ENCODE measurements at regions of chr2 and their contacts with region 1.

Region 1: GRCh38 chr2:202161151-202161835 is 77.1 kb downstream of the SUMO1 start:
- DNase-seq: no peak
- H3K4me3 ChIP-seq: no peak overlapping the region
- H3K27ac ChIP-seq: peak overlapping the region in 1 of 2 donors; percentile 43
- H3K4me1 ChIP-seq: peaks cover 0 to 4% of the 10 kb centered on the region in 2 donors
- H3K27me3 ChIP-seq: no peaks in the 10 kb centered on the region
- CTCF ChIP-seq: no peak
- POLR2A ChIP-seq: no peak

Region 2: GRCh38 chr2:201807452-201807999 is 353.8 kb before region 1 on chr2:
- intact Hi-C with region 1: loop called (anchors 10 kb)
- DNase-seq: peak in 1 of 2 donors; percentile 23
- H3K4me3 ChIP-seq: peak overlapping the region in 1 of 3 donors; percentile 27
- H3K27ac ChIP-seq: peak overlapping the region; percentile 23 to 67
- H3K4me1 ChIP-seq: no peaks in the 10 kb centered on the region
- H3K27me3 ChIP-seq: no peaks in the 10 kb centered on the region
- CTCF ChIP-seq: no peak
- POLR2A ChIP-seq: no peak

Region 3: DNA sequence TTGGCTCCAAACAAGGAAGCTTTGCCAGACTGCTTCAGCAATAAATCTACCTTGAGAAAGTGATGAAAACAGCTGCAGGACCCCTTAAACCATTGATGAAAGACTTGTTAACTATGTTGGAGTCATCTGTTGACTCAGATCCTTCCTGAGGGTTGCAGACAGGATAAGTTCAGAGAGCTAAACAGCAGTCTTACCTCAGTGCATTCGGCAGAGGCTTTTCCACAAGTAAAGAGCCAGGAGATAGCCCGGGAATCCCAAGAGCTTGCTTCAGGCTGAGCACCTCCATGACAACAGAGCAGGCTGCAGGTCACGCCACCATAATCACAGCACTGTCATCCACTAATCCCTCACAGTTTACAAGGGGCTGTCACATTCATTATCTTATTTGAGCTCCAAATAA is 64.6 kb before region 1 on chr2:
- intact Hi-C with region 1: no loop called
- DNase-seq: no peak
- H3K4me3 ChIP-seq: no peak overlapping the region
- H3K27ac ChIP-seq: no peak overlapping the region
- H3K4me1 ChIP-seq: no peaks in the 10 kb centered on the region
- H3K27me3 ChIP-seq: no peaks in the 10 kb centered on the region
- CTCF ChIP-seq: no peak
- POLR2A ChIP-seq: no peak

Region 4: DNA sequence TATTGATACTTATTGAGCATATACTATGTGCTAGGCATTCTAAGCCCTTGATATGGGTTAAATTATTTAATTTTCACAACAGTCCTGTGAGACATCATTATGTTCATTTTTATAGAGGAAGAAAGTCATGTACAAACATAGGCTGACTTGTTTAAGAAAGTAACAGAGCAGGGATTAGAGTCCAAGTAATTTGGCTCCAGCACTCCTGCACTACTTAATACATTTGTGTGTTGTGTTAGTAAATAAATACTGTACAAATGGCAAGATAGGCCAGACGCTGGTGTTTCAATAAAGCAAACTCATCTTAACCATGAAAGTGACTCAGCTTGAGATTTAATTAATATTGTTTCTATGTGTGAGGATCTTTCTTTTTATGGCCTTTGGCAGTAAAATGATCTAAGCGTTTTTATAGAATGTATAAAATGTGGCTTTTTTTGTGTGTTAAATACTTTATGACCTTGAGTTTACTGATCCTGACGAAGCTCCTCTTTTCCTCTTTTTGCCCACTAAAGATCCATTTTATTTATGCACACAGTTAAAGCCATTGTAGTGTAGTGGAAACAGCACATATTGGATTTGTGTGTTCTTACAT is 874.7 kb after region 1 on chr2:
- intact Hi-C with region 1: no loop called
- DNase-seq: no peak
- H3K4me3 ChIP-seq: no peak overlapping the region
- H3K27ac ChIP-seq: no peak overlapping the region
- H3K4me1 ChIP-seq: no peaks in the 10 kb centered on the region
- H3K27me3 ChIP-seq: no peaks in the 10 kb centered on the region
- CTCF ChIP-seq: no peak
- POLR2A ChIP-seq: no peak

Measured in breast epithelium (tissue), 4 donors.